Mammary epithelial cell (primary cell): ENCODE measurements at regions of chr11 and their contacts with region 1.

Region 1: GRCh38 chr11:90747057-90747456 is 524.2 kb upstream of the CHORDC1 start:
- DNase-seq: peak; percentile 91
- H3K4me3 ChIP-seq: no peak overlapping the region
- H3K27ac ChIP-seq: peak overlapping the region; percentile 43
- H3K4me1 ChIP-seq: peaks cover 9% of the 10 kb centered on the region
- H3K27me3 ChIP-seq: no peaks in the 10 kb centered on the region
- CTCF ChIP-seq: no peak

Region 2: DNA sequence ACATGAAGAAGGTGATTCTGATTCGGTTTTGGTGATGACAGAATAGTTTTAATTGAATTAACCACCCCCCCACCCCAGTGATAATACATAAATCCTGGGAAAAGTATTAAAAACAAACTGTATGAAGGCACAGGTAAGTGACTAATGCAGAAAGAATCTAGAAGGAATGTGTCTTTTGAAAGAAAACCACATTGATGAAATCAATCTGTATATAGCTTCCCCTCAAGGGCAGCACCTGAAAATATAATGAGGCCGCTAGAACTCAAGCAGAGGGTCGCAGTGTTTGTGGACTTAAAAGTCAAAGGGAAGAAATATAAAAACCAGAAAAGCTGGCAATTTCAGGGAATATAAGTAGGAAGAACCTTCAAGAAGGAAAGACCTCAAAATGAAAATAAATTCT is 56.3 kb after region 1 on chr11:
- CTCF ChIA-PET with region 1: no interaction called
- dilution Hi-C with region 1: no loop called
- in situ Hi-C with region 1: no loop called
- intact Hi-C with region 1: loop called (anchors 5 kb)
- DNase-seq: peak; percentile 56
- H3K4me3 ChIP-seq: peak overlapping the region in 2 of 3 experiments; percentile 33 to 42
- H3K27ac ChIP-seq: peak overlapping the region; percentile 60
- H3K4me1 ChIP-seq: peaks cover 20% of the 10 kb centered on the region
- H3K27me3 ChIP-seq: no peaks in the 10 kb centered on the region
- CTCF ChIP-seq: no peak

Region 3: GRCh38 chr11:90874986-90875385 is 127.9 kb after region 1 on chr11:
- CTCF ChIA-PET with region 1: no interaction called
- dilution Hi-C with region 1: no loop called
- in situ Hi-C with region 1: no loop called
- intact Hi-C with region 1: loop called (anchors 10 kb)
- DNase-seq: peak; percentile 53
- H3K4me3 ChIP-seq: no peak overlapping the region
- H3K27ac ChIP-seq: no peak overlapping the region
- H3K4me1 ChIP-seq: no peaks in the 10 kb centered on the region
- H3K27me3 ChIP-seq: no peaks in the 10 kb centered on the region
- CTCF ChIP-seq: no peak

Region 4: DNA sequence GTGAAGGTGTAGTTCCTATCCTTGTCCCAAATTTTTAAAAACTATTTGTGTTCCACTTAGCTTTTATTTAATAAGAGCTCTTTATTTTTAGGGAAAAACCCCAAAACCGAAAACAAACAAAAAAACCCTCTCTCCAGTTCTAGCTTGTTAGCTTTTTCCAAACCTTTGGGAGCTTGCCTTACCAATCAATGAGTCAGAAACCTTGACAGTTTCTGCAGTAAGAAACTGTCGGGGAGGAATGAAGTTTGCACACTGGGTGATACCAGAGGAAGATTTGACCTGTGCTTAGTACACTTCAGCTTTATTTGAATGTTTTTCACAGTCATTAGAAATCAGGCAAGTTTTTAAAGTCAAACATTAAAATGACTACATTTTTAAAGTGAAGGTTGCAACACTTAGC is 1582.6 kb after region 1 on chr11:
- CTCF ChIA-PET with region 1: no interaction called
- dilution Hi-C with region 1: no loop called
- in situ Hi-C with region 1: no loop called
- intact Hi-C with region 1: no loop called
- DNase-seq: peak; percentile 84
- H3K4me3 ChIP-seq: no peak overlapping the region
- H3K27ac ChIP-seq: no peak overlapping the region
- H3K4me1 ChIP-seq: no peaks in the 10 kb centered on the region
- H3K27me3 ChIP-seq: peaks cover 3% of the 10 kb centered on the region
- CTCF ChIP-seq: no peak

Region 5: DNA sequence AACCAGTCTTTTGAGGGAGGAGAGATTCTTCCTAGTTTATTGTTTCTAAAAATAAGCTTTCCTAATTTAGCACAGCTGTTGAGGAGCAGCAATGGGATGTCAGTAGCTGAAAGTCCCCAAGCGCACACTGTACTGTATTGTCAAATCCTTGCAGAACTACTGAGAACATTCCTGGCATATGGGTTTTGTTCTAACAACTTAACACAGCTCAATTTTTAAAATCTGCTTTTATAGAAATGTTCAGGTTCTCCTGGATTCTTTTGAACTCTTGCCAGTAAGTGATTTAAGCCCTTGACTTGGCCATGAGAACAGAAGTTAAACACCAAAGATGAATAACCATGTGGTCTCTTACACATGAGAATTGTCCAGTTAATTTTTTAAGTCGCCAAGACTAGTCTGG is 1696.1 kb after region 1 on chr11:
- CTCF ChIA-PET with region 1: no interaction called
- dilution Hi-C with region 1: no loop called
- in situ Hi-C with region 1: no loop called
- intact Hi-C with region 1: no loop called
- DNase-seq: no peak
- H3K4me3 ChIP-seq: no peak overlapping the region
- H3K27ac ChIP-seq: no peak overlapping the region
- H3K4me1 ChIP-seq: peaks cover 16% of the 10 kb centered on the region
- H3K27me3 ChIP-seq: no peaks in the 10 kb centered on the region
- CTCF ChIP-seq: no peak